ENCODE measurements at regions of chr17 and their contacts with region 1.

Region 1: GRCh38 chr17:76501018-76501826 is at the start of gene RHBDF2:
- DNase-seq: peak; percentile 85 to 94
- ATAC-seq: peak; percentile 80 to 91 (median 88)
- H3K4me3 ChIP-seq: peak within 1 kb of the TSS; percentile 35 to 85 (median 78)
- H3K27ac ChIP-seq: peak within 1 kb of the TSS; percentile 83 to 97 (median 92)
- H3K4me1 ChIP-seq: peaks cover 20 to 64% (median 48%) of the 10 kb centered on the region in 9 donors
- H3K27me3 ChIP-seq: no peaks in the 10 kb centered on the region
- CTCF ChIP-seq: no peak
- total RNA-seq, gene RHBDF2: 6.5 to 33.1 (median 7.7) TPM

Region 2: DNA sequence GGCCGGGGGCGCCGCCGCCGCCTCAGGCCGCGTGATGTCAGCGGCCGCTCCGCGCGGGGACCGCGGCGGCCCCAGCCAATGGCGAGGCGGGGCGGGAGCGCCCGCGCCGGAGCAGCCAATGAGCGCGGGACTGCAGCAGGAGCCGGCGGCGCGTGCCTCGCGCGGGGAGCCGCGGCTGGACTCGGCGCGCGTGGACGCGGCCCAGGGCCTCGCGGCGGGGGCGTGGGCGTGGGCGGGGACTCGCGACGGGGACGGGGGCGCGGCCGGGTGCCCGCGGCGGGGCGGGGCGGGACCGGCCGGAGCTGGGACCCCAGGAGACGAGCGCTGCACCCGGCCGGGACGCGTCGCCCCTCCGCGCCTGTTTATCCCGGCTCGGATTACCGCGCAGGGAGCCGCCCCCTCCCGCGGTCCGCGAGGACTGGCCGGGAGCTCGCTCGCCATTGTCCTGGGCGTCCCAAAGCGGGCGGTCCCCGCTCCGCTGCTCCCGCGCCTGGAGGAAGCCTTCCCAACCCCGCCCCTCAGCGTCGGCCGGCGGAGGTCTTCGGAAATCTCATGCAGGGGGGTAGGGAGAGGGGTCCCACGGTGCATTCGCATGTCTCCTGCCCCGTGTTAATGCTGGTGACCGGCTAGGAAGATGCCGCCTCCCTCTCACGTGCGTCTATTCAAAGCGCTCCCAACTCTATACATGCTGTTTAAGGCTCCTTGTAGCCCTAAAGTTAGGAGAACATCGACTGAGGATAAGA is 260.6 kb before region 1 on chr17 and contains the start of gene RNF157:
- intact Hi-C with region 1: no loop called
- DNase-seq: peak; percentile 32 to 69
- ATAC-seq: peak; percentile 71 to 89 (median 86)
- H3K4me3 ChIP-seq: peak within 1 kb of the TSS; percentile 51 to 93 (median 67)
- H3K27ac ChIP-seq: peak within 1 kb of the TSS in 9 of 10 donors; percentile 4 to 75 (median 59)
- H3K4me1 ChIP-seq: peaks cover 4 to 26% (median 15%) of the 10 kb centered on the region in 9 donors
- H3K27me3 ChIP-seq: peaks cover 0 to 55% (median 0%) of the 10 kb centered on the region in 7 donors
- CTCF ChIP-seq: no peak
- total RNA-seq, gene RNF157: 1.3 to 18.8 (median 3.4) TPM

Region 3: GRCh38 chr17:76485569-76485968 is 15.7 kb before region 1 on chr17:
- intact Hi-C with region 1: loop called in 1 of 10 experiments (anchors 2 kb)
- DNase-seq: no peak
- ATAC-seq: peak; percentile 19 to 89 (median 64)
- H3K4me3 ChIP-seq: no peak overlapping the region
- H3K27ac ChIP-seq: peak overlapping the region in 6 of 10 donors; percentile 21 to 76 (median 46)
- H3K4me1 ChIP-seq: peaks cover 0 to 62% (median 7%) of the 10 kb centered on the region in 9 donors
- H3K27me3 ChIP-seq: no peaks in the 10 kb centered on the region
- CTCF ChIP-seq: no peak

Measured in heart right ventricle (tissue), 16 donors.